RWPE1 (cell line): ENCODE measurements at regions of chr5 and their contacts with region 1.

Region 1: DNA sequence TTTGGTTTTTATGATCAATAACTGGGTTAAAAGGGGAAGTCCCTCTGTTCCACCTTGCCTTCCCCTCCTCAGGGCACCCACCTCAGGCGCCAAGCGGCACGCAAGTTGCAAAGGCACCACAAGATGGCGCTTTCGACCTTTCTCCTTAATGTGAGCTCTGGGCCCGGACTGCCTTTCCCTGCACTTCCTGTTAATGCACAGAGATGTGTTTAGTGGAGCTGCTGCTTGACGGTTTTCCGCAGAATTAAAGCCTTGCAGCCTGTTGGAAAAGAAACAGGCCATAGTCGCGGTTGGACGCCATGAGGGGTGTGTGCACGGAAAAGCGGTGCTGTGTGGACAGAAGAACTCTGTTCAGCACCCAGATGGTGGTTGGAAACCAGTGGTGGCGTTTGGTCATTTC is 17.9 kb downstream of the CXCL14 start:
- DNase-seq: peak; percentile 91
- H3K27ac ChIP-seq: no peak overlapping the region
- CTCF ChIP-seq: peak; percentile 95

Region 2: GRCh38 chr5:135423146-135423845 is 137.6 kb before region 1 on chr5:
- CTCF ChIA-PET with region 1: no interaction called
- POLR2A ChIA-PET with region 1: no interaction called
- DNase-seq: no peak
- H3K27ac ChIP-seq: no peak overlapping the region
- CTCF ChIP-seq: no peak

Region 3: GRCh38 chr5:135729321-135729786 is 168.5 kb after region 1 on chr5:
- CTCF ChIA-PET with region 1: interaction called, 57 read pairs
- POLR2A ChIA-PET with region 1: interaction called, 5 read pairs
- DNase-seq: peak; percentile 65
- H3K27ac ChIP-seq: no peak overlapping the region
- CTCF ChIP-seq: no peak